ENCODE measurements at regions of chr11 and their contacts with region 1.

Region 1: DNA sequence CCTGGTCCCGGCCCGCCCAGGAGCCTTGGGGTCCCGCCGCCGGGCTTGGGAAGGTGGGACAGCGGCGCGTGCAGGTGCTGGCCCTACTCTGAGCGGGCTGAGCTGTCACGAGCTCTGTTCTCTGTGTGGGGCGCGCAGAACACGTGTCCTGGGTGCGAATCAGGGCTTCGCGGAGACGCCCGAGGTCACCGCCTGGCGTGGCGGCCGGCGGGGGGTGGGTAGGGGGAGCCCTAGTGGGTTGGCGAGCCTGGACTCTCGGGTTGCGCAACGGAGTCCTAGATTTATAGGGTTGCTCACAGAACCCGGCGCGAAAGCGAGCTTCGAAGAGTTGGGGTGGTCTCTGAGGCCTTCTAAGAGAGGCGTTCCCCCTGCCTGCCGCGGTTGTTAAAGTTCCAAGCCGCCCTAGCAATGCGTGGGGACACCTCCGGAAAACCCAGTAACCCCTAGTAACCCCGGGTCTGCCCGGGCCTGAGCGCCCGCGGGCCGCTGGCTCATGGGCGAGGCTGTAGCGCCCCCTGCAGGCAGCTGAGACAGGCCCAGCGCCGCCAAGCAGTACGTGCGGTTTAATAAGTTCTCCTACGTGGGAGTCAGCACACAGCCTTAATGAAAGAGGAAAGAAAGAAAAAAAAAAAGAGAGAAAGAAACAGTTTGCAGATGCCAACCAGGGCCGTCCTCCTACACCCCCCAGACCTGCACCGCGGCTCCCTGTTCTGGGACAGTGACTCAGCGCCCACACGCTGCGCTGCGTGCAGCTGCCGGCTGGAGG is 2.8 kb downstream of the ADM start:
- DNase-seq: peak; percentile 95
- H3K4me3 Mint-ChIP-seq: peak overlapping the region; percentile 93
- H3K27ac Mint-ChIP-seq: peak overlapping the region; percentile 86
- H3K4me1 Mint-ChIP-seq: peaks cover 55% of the 10 kb centered on the region
- H3K27me3 Mint-ChIP-seq: peaks cover 46% of the 10 kb centered on the region

Region 2: DNA sequence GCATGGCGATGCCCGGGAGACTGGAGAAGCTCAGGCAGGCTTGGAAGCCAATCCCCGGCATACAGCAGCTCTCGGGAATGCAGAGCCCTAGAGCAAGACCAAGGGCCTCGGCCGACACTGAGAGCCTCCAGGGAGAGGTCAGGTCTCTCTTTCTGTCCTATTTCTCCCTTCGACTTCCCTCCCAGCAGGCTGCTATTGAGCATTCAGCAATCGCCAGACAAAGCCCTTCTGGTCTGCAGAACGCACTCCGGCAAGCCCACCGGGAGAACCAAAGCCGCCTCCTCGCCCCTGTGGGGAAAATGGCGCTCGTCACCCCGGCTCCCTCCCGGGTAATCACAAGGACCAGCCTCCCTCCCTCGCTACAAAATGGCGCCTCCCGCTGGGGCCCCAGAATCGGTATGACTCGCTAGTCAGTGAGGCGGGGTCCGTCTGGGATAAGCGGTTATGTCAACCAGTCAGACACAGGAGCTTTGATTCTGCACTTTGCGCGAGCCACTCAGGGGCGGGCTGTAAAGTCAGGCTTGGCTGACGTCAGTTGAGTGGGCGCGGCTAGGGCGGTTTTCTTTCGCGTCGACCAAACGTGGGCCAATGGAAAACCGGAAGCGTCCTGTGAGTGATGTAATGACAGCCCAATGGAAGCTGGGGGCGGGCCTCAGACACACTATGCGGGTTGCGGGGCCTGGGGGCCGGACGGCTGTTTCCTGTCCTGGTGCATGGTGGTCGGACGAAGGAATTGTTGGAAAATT is 847.1 kb before region 1 on chr11 and contains the start of gene ZNF143:
- intact Hi-C with region 1: loop called (anchors 5 kb)
- DNase-seq: peak; percentile 100
- H3K4me3 Mint-ChIP-seq: peak within 1 kb of the TSS; percentile 97
- H3K27ac Mint-ChIP-seq: peak within 1 kb of the TSS; percentile 98
- H3K4me1 Mint-ChIP-seq: peaks cover 23% of the 10 kb centered on the region
- H3K27me3 Mint-ChIP-seq: no peaks in the 10 kb centered on the region
- total RNA-seq, gene ZNF143: 38.6 and 39.2 TPM in 2 replicates

Region 3: GRCh38 chr11:9613118-9613829 is 694.4 kb before region 1 on chr11:
- intact Hi-C with region 1: loop called (anchors 5 kb)
- DNase-seq: peak; percentile 96
- H3K4me3 Mint-ChIP-seq: peak overlapping the region; percentile 90
- H3K27ac Mint-ChIP-seq: peak overlapping the region; percentile 98
- H3K4me1 Mint-ChIP-seq: peaks cover 35% of the 10 kb centered on the region
- H3K27me3 Mint-ChIP-seq: no peaks in the 10 kb centered on the region

Region 4: GRCh38 chr11:9861860-9862725 is 445.5 kb before region 1 on chr11:
- intact Hi-C with region 1: loop called (anchors 5 kb)
- DNase-seq: peak; percentile 84
- H3K4me3 Mint-ChIP-seq: no peak overlapping the region
- H3K27ac Mint-ChIP-seq: peak overlapping the region; percentile 7
- H3K4me1 Mint-ChIP-seq: peaks cover 33% of the 10 kb centered on the region
- H3K27me3 Mint-ChIP-seq: peaks cover 1% of the 10 kb centered on the region

Region 5: GRCh38 chr11:10293423-10294289 is 14.0 kb before region 1 on chr11 and contains the start of gene SBF2:
- intact Hi-C with region 1: loop called (anchors 1 kb)
- DNase-seq: peak; percentile 93
- H3K4me3 Mint-ChIP-seq: peak within 1 kb of the TSS; percentile 82
- H3K27ac Mint-ChIP-seq: peak within 1 kb of the TSS; percentile 76
- H3K4me1 Mint-ChIP-seq: peaks cover 33% of the 10 kb centered on the region
- H3K27me3 Mint-ChIP-seq: peaks cover 51% of the 10 kb centered on the region
- total RNA-seq, gene SBF2: 7.1 and 9.1 TPM in 2 replicates

Region 6: GRCh38 chr11:10725114-10725906 is 417.7 kb after region 1 on chr11:
- intact Hi-C with region 1: loop called (anchors 10 kb)
- DNase-seq: peak; percentile 71
- H3K4me3 Mint-ChIP-seq: peak overlapping the region; percentile 65
- H3K27ac Mint-ChIP-seq: peak overlapping the region; percentile 88
- H3K4me1 Mint-ChIP-seq: peaks cover 22% of the 10 kb centered on the region
- H3K27me3 Mint-ChIP-seq: peaks cover 37% of the 10 kb centered on the region

Region 7: DNA sequence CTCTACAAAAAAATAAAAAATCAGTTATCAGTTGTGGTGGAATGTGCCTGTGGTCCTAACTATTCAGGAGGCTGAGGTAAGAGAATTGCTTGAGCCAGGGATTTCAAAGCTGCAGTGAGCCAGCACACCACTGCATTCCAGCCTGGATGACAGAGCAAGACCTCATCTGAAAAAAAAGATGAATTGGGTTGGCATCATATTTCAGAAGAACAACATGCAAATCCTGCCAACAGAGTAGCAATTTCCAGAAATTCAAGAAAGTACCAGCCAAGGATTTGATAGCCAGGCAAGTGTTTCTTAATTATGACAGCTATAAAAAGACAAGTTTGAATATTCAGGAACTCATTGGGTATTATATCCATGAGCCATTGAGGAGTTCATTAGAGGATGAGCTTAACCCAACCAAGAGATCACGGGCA is 1609.4 kb after region 1 on chr11:
- intact Hi-C with region 1: no loop called
- DNase-seq: no peak
- H3K4me3 Mint-ChIP-seq: no peak overlapping the region
- H3K27ac Mint-ChIP-seq: no peak overlapping the region
- H3K4me1 Mint-ChIP-seq: no peaks in the 10 kb centered on the region
- H3K27me3 Mint-ChIP-seq: no peaks in the 10 kb centered on the region

Measured in activated CD4-positive, alpha-beta T cell treated with anti-CD3 and anti-CD28 coated beads, Interleukin-2, amount 10 ng/mL, durations not matched to agents 24 days and 14 days (primary cell).